Lower leg skin (tissue), 4 donors: ENCODE measurements at regions of chr9 and their contacts with region 1.

Region 1: GRCh38 chr9:111759762-111760639 is 34.7 kb downstream of the SHOC1 start:
- DNase-seq: peak in 1 of 2 donors; percentile 66
- H3K4me3 ChIP-seq: no peak overlapping the region
- CTCF ChIP-seq: peak in 1 of 3 donors; percentile 11
- POLR2A ChIP-seq: no peak

Region 2: DNA sequence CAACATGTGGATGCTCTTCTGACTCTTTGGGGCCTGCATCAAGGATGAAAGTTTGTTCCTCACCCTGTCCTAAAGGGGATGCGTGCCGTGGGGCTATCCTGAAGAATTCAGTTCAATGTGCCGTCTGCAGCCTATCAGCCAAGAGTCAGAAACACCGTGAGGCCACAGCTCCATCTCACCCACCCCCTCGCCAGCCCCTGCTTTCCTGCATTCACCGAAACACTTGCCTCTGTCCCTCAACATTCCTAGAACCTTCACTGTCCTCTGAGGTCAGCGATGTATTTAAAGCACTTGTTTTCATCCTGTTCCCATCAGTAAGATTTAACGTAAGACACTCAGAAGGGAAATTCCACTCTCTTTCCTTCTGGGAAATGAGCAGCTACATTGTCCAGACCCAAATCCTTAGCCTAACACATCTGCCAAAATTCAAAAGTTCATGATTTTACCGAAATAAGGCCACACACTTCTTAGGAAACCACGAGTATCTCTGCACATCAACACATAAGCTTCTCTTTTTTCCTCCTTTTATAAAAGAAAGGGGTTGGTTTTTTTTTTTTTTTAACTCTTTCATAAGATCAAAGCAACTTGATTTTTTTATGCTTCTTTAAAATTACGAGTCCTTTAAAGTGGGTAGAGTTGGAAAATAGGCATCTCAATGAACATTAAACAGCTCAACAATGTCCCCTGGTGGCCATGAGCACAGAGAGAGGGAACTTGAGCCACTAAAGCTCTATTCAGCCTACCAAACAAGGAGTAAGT is 314.4 kb after region 1 on chr9:
- intact Hi-C with region 1: loop called (anchors 5 kb)
- DNase-seq: peak in 1 of 2 donors; percentile 72
- H3K4me3 ChIP-seq: no peak overlapping the region
- CTCF ChIP-seq: peak in 1 of 3 donors; percentile 86
- POLR2A ChIP-seq: no peak